Left colon (tissue), 2 donors: ENCODE measurements at regions of chr4 and their contacts with region 1.

Region 1: GRCh38 chr4:150217192-150217591 is 138.9 kb downstream of the DCLK2 start:
- DNase-seq: no peak
- ATAC-seq: no peak

Region 2: DNA sequence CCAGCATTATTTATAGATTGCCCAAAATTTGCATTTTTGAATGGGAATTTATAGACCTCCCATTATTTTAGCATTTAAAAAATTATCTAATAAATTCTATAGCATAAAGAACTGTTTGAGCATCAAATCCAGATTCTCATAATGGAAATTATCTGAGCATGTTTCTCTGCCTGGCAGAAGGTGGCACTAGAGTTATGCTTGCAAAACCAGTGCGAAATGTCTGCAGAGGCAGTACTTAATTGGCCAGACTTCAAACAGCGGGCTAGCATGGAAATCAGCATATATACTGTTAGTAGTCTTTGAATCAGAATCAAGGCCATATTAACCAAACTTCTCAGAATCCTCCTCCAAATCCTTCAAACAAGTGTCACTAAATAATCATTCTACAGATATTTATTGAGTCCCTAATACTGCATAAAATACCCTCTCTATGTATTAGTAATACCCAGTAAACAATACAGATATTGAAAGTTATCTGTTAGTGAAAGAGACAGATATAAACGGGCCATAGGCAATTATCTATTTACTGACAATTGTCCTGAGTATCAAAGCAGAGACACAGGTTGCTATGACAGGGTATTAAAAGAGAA is 217.6 kb before region 1 on chr4:
- intact Hi-C with region 1: loop called in 1 of 2 experiments (anchors 10 kb)
- DNase-seq: no peak
- ATAC-seq: peak; percentile 48